Left cardiac atrium (tissue), 4 donors: ENCODE measurements at regions of chr4 and their contacts with region 1.

Region 1: GRCh38 chr4:167021545-167022155 is 212.6 kb downstream of the SPOCK3 start:
- DNase-seq: peak; percentile 64
- ATAC-seq: peak; percentile 19 to 70

Region 2: GRCh38 chr4:167290678-167291077 is 269.0 kb after region 1 on chr4:
- intact Hi-C with region 1: loop called (anchors 2 to 5 kb)
- DNase-seq: no peak
- ATAC-seq: no peak

Region 3: GRCh38 chr4:168076989-168077725 is 1055.5 kb after region 1 on chr4:
- intact Hi-C with region 1: loop called in 1 of 2 experiments (anchors 5 kb)
- DNase-seq: peak; percentile 28
- ATAC-seq: peak in 1 of 2 donors; percentile 41

Region 4: GRCh38 chr4:168153596-168154440 is 1132.2 kb after region 1 on chr4:
- intact Hi-C with region 1: loop called in 1 of 2 experiments (anchors 5 kb)
- DNase-seq: peak; percentile 78
- ATAC-seq: peak; percentile 53 to 73